A673 (cell line): ENCODE measurements at regions of chr4 and their contacts with region 1.

Region 1: GRCh38 chr4:25549413-25549812 is 106.2 kb upstream of the SLC34A2 start:
- DNase-seq: no peak
- H3K4me3 ChIP-seq: no peak overlapping the region
- H3K27ac ChIP-seq: no peak overlapping the region
- H3K4me1 ChIP-seq: no peaks in the 10 kb centered on the region
- H3K27me3 ChIP-seq: no peaks in the 10 kb centered on the region
- CTCF ChIP-seq: no peak

Region 2: GRCh38 chr4:25523405-25523804 is 26.0 kb before region 1 on chr4:
- CTCF ChIA-PET with region 1: interaction called, 11 read pairs
- POLR2A ChIA-PET with region 1: no interaction called
- intact Hi-C with region 1: no loop called
- DNase-seq: no peak
- H3K4me3 ChIP-seq: no peak overlapping the region
- H3K27ac ChIP-seq: no peak overlapping the region
- H3K4me1 ChIP-seq: no peaks in the 10 kb centered on the region
- H3K27me3 ChIP-seq: no peaks in the 10 kb centered on the region
- CTCF ChIP-seq: no peak